ENCODE measurements at regions of chr10 and their contacts with region 1.

Region 1: GRCh38 chr10:120318862-120319261 is 138.2 kb upstream of the PLPP4 start:
- DNase-seq: no peak
- ATAC-seq: no peak
- H3K4me3 ChIP-seq: no peak overlapping the region
- H3K27ac ChIP-seq: no peak overlapping the region
- H3K4me1 ChIP-seq: no peaks in the 10 kb centered on the region
- H3K27me3 ChIP-seq: no peaks in the 10 kb centered on the region
- CTCF ChIP-seq: no peak

Region 2: DNA sequence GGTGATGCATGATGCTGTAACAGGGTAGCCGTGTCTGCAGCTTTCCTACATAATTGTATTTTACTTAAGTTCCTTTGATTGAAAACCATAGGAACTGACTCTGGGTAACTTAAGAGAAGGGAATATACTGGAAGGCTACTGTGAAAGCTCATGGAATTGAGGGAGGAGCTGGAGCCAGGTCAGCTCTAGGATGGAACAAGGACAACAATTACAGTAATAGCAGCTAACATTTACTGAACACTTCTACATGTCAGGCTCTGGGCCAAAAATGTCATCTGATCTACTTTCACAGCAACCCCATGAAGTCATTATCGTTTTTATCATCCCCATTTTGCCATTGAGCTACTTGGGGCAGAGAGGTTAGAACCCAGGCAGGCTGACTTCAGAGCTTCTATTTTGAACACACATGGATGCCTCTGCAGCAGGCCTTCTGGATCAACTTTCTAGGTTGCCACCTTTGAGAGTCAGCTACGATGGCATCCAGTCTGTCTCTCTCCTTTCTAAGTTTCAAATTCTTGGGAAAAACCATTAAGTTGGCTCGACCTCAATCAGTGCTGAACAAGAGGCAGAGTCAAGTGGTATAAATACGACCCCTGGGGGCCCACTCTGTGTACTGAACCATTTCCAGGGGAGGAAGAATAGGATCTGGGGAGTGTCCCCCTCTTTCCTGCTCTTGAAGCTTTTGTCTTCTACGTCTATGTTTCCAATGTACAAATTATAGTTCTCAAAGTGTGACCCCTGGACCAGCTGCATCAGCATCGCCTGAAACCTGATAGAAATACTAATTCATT is 134.1 kb before region 1 on chr10:
- intact Hi-C with region 1: no loop called
- DNase-seq: no peak
- ATAC-seq: no peak
- H3K4me3 ChIP-seq: no peak overlapping the region
- H3K27ac ChIP-seq: no peak overlapping the region
- H3K4me1 ChIP-seq: no peaks in the 10 kb centered on the region
- H3K27me3 ChIP-seq: no peaks in the 10 kb centered on the region
- CTCF ChIP-seq: no peak

Region 3: DNA sequence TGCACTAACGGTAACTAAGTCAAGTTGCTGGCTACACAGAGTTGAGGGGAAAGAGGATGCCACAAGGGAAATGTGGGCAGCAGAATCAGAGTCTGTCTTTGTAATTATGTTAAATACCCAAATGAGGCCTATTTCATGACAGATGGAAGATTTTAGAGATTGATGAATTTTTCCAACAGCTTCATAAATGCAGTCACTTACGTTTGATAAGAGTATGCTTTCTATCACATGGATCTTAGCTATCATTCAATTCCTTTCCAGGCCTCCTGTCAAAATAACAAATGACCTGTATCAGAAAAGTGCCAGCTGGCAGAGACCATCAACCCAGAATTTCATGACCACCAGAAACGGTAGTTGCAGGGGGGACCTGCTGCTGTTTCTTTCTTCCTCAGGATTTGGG is 10.3 kb before region 1 on chr10:
- intact Hi-C with region 1: no loop called
- DNase-seq: no peak
- ATAC-seq: no peak
- H3K4me3 ChIP-seq: no peak overlapping the region
- H3K27ac ChIP-seq: no peak overlapping the region
- H3K4me1 ChIP-seq: no peaks in the 10 kb centered on the region
- H3K27me3 ChIP-seq: peaks cover 0 to 3% (median 0%) of the 10 kb centered on the region in 7 donors
- CTCF ChIP-seq: no peak

Region 4: DNA sequence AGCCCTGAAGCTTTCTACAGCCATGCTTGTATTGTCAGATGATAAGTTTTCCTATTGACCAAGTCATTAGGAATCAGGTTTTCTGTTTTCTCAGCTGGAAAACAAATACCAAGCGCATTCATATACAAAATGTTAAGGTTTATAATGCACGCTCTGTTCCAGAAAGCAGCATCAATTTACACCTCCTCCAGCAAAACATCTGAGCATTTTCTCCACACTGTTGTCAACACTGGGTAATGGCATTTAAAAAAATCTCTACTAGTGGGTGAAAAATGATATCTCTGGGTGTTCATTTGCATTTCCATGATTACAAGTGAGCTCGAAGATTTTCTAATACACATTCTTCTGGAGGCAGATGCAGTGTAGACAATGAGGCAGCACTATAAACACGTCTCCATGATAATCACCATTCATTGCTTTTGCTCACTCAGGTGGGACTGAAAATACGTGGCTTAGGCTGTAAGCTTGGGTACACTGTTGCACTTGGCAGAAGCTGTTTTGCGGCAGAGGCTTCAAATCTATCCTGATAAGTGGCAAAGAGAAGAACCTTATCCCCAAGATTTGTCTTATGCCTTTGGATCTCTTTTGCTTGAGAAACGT is 23.4 kb after region 1 on chr10:
- intact Hi-C with region 1: loop called in 1 of 10 experiments (anchors 1 kb)
- DNase-seq: no peak
- ATAC-seq: no peak
- H3K4me3 ChIP-seq: no peak overlapping the region
- H3K27ac ChIP-seq: no peak overlapping the region
- H3K4me1 ChIP-seq: no peaks in the 10 kb centered on the region
- H3K27me3 ChIP-seq: peaks cover 0 to 8% (median 0%) of the 10 kb centered on the region in 7 donors
- CTCF ChIP-seq: no peak